ENCODE measurements at regions of chr19 and their contacts with region 1.

Region 1: DNA sequence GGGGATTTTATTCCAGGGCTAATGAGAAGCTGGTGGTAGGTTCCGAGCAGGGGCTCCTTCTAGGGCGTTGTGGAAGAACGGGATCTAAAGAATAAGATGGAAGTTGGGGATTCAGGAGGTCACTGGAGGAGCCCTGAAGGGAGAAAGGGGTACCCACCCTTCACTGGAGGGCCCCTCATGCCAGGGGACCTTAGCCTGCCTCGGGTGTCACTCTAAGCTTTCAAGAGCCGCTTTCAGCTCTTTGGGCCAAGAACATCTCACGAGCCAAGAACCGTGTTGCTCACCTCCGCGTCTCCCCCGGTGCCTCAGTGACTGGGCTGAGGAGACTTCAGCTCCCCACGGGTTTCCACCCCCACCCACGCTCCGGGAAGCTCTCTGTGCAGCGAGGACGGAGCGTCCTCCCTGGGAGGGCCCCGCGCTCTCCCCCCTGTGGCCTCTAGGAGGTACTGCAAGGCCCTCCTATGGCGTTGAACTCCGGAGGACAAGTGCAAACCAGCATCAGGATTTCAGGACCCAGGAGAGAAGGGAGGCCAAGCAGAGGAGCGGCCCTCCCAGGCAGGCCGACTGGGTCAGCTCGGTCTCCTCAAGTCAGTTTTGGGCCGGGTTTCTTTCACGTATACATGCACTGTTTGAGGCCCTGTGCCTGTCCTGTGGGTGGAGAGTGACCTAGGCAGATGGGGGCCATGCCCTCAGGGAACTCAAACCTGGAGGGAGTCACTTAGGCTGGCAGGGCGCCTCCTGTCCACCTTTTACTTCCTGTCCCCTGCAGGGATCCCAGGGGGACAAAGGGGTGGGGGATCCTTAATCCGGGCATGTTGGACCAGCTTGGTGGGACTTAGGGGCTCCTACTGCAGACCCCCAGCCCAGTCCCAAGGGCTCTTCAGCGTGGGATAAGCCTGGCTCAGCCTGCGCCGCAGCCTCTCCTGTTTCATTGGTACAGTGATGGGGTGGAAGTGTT is 5.1 kb upstream of the KRTDAP start:
- DNase-seq: no peak
- H3K4me3 ChIP-seq: peak overlapping the region in 1 of 4 donors; percentile 24
- H3K27ac ChIP-seq: no peak overlapping the region
- H3K4me1 ChIP-seq: peaks cover 6 to 9% (median 7%) of the 10 kb centered on the region in 4 donors
- H3K27me3 ChIP-seq: peaks cover 0 to 40% (median 0%) of the 10 kb centered on the region in 4 donors
- CTCF ChIP-seq: peak in 2 of 3 experiments; percentile 87
- EP300 ChIP-seq: no peak
- POLR2A ChIP-seq: no peak

Region 2: DNA sequence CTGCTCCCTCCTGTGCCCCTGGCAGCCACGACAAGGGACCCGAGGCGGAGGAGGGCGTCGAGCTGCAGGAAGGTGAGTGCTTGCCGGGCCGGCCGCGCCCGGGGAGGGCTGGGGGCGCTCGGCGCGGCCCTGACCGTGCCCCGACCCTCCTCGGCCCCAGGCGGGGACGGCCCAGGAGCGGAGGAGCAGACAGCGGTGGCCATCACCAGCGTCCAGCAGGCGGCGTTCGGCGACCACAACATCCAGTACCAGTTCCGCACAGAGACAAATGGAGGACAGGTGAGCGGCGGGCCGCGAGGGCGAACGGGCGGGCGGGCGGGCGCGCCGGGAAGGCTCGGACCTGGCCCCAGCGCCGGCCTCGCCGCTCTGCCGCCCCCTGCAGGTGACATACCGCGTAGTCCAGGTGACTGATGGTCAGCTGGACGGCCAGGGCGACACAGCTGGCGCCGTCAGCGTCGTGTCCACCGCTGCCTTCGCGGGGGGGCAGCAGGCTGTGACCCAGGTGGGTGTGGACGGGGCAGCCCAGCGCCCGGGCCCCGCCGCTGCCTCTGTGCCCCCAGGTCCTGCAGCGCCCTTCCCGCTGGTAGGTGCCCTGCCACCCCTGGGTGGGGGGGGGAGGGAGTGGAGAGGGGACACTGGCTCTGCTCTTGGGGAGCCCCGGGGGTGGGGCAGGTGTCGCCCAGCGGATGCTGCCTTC is 225.8 kb before region 1 on chr19:
- intact Hi-C with region 1: loop called (anchors 5 kb)
- DNase-seq: no peak
- H3K4me3 ChIP-seq: peak overlapping the region; percentile 76 to 95 (median 90)
- H3K27ac ChIP-seq: peak overlapping the region; percentile 94 to 97 (median 96)
- H3K4me1 ChIP-seq: peaks cover 30 to 48% (median 42%) of the 10 kb centered on the region in 4 donors
- H3K27me3 ChIP-seq: no peaks in the 10 kb centered on the region
- CTCF ChIP-seq: peak; percentile 52 to 80 (median 79)
- EP300 ChIP-seq: no peak
- POLR2A ChIP-seq: no peak

Region 3: DNA sequence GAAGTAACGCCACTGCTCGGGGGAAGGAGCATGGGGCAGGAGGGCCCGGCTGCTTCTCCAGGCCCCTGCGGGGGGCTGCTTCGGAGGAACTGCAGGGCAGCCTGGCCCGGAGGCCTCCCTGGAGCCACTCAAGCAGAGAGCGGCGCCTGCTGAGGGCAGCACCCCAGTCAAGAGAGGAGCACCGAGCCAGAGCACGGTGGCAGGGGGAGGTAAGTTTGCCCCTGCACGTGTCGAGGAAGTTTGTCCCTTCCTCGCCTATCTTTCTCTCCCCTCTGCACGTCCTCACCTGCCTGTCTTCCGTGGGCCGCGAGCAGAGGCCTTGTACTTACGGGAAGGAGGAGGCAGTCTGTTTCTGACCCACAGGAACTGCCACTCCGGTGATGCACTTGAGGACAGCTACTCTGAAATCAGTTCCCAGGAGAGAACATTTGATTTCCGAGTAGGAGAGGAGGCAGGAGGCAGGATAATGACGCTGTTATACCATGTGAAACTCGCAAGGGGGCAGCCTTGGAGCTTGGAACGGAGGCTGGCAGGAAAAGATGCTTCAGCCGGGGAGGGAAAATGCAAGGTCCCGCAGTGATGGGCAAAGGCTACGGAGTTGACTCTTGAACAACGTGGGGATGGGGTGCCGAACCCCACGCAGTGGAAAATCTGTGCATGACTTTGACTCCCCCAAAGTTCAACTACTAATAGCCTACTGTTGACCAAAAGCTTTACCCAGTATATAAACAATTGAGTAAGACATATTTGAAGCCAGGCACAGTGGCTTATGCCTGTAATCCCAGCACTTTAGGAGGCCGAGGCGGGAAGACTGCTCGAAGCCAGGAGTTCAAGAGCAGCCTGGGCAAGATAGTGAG is 142.7 kb before region 1 on chr19:
- intact Hi-C with region 1: loop called (anchors 5 kb)
- DNase-seq: no peak
- H3K4me3 ChIP-seq: no peak overlapping the region
- H3K27ac ChIP-seq: no peak overlapping the region
- H3K4me1 ChIP-seq: peaks cover 0 to 3% (median 0%) of the 10 kb centered on the region in 4 donors
- H3K27me3 ChIP-seq: peaks cover 0 to 67% (median 0%) of the 10 kb centered on the region in 4 donors
- CTCF ChIP-seq: peak; percentile 44 to 64 (median 55)
- EP300 ChIP-seq: no peak
- POLR2A ChIP-seq: no peak

Measured in esophagus muscularis mucosa (tissue), 4 donors.